ENCODE measurements at regions of chr4 and their contacts with region 1.

Region 1: GRCh38 chr4:152535903-152536544 is at the start of gene FBXW7:
- DNase-seq: peak; percentile 98 to 100 (median 99)
- ATAC-seq: peak; percentile 79
- H3K4me3 ChIP-seq: peak within 1 kb of the TSS; percentile 84
- H3K4me3 Mint-ChIP-seq: peak within 1 kb of the TSS; percentile 97
- H3K27ac ChIP-seq: peak within 1 kb of the TSS; percentile 90 to 98
- H3K27ac Mint-ChIP-seq: peak within 1 kb of the TSS; percentile 94
- H3K4me1 ChIP-seq: peaks cover 36% of the 10 kb centered on the region
- H3K4me1 Mint-ChIP-seq: peaks cover 66% of the 10 kb centered on the region
- H3K27me3 ChIP-seq: no peaks in the 10 kb centered on the region
- H3K27me3 Mint-ChIP-seq: no peaks in the 10 kb centered on the region
- CTCF ChIP-seq: no peak
- total RNA-seq, gene FBXW7: 128 to 140 TPM

Region 2: GRCh38 chr4:151760712-151761527 is 775.1 kb before region 1 on chr4 and contains the start of gene GATB:
- CTCF ChIA-PET with region 1: no interaction called
- POLR2A ChIA-PET with region 1: interaction called, 6 read pairs
- intact Hi-C with region 1: loop called in 1 of 2 experiments (anchors 2 kb)
- DNase-seq: peak; percentile 85 to 97 (median 88)
- ATAC-seq: peak; percentile 97
- H3K4me3 ChIP-seq: peak within 1 kb of the TSS; percentile 85
- H3K4me3 Mint-ChIP-seq: peak within 1 kb of the TSS; percentile 96
- H3K27ac ChIP-seq: peak within 1 kb of the TSS; percentile 53 to 55
- H3K27ac Mint-ChIP-seq: peak within 1 kb of the TSS; percentile 86
- H3K4me1 ChIP-seq: peaks cover 12% of the 10 kb centered on the region
- H3K4me1 Mint-ChIP-seq: peaks cover 17% of the 10 kb centered on the region
- H3K27me3 ChIP-seq: no peaks in the 10 kb centered on the region
- H3K27me3 Mint-ChIP-seq: no peaks in the 10 kb centered on the region
- CTCF ChIP-seq: peak; percentile 60
- total RNA-seq, gene GATB: 3.6 to 5.8 TPM

Region 3: GRCh38 chr4:152500800-152501434 is 35.1 kb before region 1 on chr4:
- CTCF ChIA-PET with region 1: interaction called, 19 read pairs
- POLR2A ChIA-PET with region 1: interaction called, 48 read pairs
- intact Hi-C with region 1: loop called (anchors 2 to 5 kb)
- DNase-seq: peak in 10 of 14 experiments; percentile 22 to 90 (median 56)
- ATAC-seq: peak; percentile 85
- H3K4me3 ChIP-seq: no peak overlapping the region
- H3K4me3 Mint-ChIP-seq: no peak overlapping the region
- H3K27ac ChIP-seq: no peak overlapping the region
- H3K27ac Mint-ChIP-seq: no peak overlapping the region
- H3K4me1 ChIP-seq: peaks cover 3% of the 10 kb centered on the region
- H3K4me1 Mint-ChIP-seq: peaks cover 40% of the 10 kb centered on the region
- H3K27me3 ChIP-seq: no peaks in the 10 kb centered on the region
- H3K27me3 Mint-ChIP-seq: no peaks in the 10 kb centered on the region
- CTCF ChIP-seq: peak; percentile 84

Region 4: GRCh38 chr4:152564344-152564743 is 28.3 kb after region 1 on chr4:
- CTCF ChIA-PET with region 1: interaction called, 7 read pairs
- POLR2A ChIA-PET with region 1: interaction called, 11 read pairs
- intact Hi-C with region 1: no loop called
- DNase-seq: no peak
- ATAC-seq: no peak
- H3K4me3 ChIP-seq: no peak overlapping the region
- H3K4me3 Mint-ChIP-seq: no peak overlapping the region
- H3K27ac ChIP-seq: no peak overlapping the region
- H3K27ac Mint-ChIP-seq: no peak overlapping the region
- H3K4me1 ChIP-seq: no peaks in the 10 kb centered on the region
- H3K4me1 Mint-ChIP-seq: no peaks in the 10 kb centered on the region
- H3K27me3 ChIP-seq: no peaks in the 10 kb centered on the region
- H3K27me3 Mint-ChIP-seq: no peaks in the 10 kb centered on the region
- CTCF ChIP-seq: no peak

Region 5: DNA sequence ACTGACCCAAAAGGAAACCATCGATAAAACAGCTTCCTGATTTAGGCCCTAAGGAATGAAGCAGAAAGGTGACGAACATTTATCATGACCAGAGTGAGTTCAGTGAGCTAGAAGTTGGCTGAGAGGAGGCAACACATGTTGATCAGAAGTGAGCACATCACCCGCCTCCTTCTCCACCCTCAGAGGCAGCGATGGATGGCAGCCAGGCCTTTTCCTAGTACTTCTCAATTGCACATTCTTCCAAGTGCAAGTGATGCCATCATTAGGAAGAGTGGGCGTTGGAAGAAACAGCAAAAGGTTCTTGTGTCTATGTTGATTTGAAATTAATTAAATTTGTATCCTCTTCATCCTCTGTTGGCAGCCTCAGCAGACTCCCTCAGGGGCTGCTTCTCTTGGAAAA is 92.1 kb after region 1 on chr4:
- CTCF ChIA-PET with region 1: no interaction called
- POLR2A ChIA-PET with region 1: interaction called, 4 read pairs
- intact Hi-C with region 1: loop called in 1 of 2 experiments (anchors 5 kb)
- DNase-seq: no peak
- ATAC-seq: no peak
- H3K4me3 ChIP-seq: no peak overlapping the region
- H3K4me3 Mint-ChIP-seq: no peak overlapping the region
- H3K27ac ChIP-seq: no peak overlapping the region
- H3K27ac Mint-ChIP-seq: no peak overlapping the region
- H3K4me1 ChIP-seq: no peaks in the 10 kb centered on the region
- H3K4me1 Mint-ChIP-seq: no peaks in the 10 kb centered on the region
- H3K27me3 ChIP-seq: no peaks in the 10 kb centered on the region
- H3K27me3 Mint-ChIP-seq: no peaks in the 10 kb centered on the region
- CTCF ChIP-seq: no peak

Region 6: GRCh38 chr4:152779513-152780266 is 243.7 kb after region 1 on chr4 and contains the starts of genes ARFIP1 and TIGD4:
- CTCF ChIA-PET with region 1: no interaction called
- POLR2A ChIA-PET with region 1: interaction called, 17 read pairs
- intact Hi-C with region 1: loop called in 1 of 2 experiments (anchors 5 kb)
- DNase-seq: peak; percentile 84 to 96 (median 92)
- ATAC-seq: peak; percentile 84
- H3K4me3 ChIP-seq: peak within 1 kb of the TSS; percentile 72
- H3K4me3 Mint-ChIP-seq: peak within 1 kb of the TSS; percentile 90
- H3K27ac ChIP-seq: peak within 1 kb of the TSS; percentile 75 to 79
- H3K27ac Mint-ChIP-seq: peak within 1 kb of the TSS; percentile 95
- H3K4me1 ChIP-seq: peaks cover 21% of the 10 kb centered on the region
- H3K4me1 Mint-ChIP-seq: peaks cover 50% of the 10 kb centered on the region
- H3K27me3 ChIP-seq: no peaks in the 10 kb centered on the region
- H3K27me3 Mint-ChIP-seq: peaks cover 11% of the 10 kb centered on the region
- CTCF ChIP-seq: no peak
- total RNA-seq, gene ARFIP1: 2.6 to 3.0 TPM
- total RNA-seq, gene TIGD4: 0.22 TPM in 1 of 2 experiments, not detected in the other

Measured in CD4-positive, alpha-beta T cell (primary cell).